ENCODE measurements at regions of chr4 and their contacts with region 1.

Region 1: DNA sequence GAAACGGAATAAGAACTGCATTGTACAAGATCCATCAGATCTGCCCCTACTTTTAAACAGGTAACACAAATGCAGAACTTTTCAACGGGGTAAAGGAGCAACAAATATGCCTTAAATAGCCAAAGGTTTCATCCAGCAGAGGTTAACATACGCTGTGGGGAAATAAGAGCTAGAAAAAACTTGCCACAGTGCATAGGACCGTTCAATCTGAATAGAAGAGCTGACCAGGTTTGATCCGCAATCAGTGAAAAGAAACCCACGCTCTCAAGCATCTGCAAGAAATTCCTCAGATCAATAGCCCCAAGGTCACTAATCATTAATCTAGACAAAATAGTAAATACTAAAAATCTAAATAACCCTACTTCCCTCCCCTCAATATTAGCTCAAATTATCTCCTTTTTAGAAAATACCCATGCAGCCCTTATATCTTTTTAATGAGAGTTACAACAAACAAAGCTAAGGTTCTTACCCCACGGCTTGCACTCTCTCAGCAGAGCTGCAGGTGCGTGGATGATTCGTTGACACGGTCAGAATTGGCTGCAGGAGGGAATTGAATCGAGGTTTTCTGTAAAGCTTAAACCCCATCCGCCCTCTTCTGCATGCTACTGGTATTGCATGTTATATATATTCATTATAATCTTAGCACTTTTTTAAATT is at the start of gene TLR10:
- DNase-seq: peak; percentile 46
- H3K4me3 ChIP-seq: no peak within 1 kb of the TSS
- H3K27ac ChIP-seq: no peak within 1 kb of the TSS
- H3K4me1 ChIP-seq: no peaks in the 10 kb centered on the region
- H3K27me3 ChIP-seq: no peaks in the 10 kb centered on the region
- CTCF ChIP-seq: peak; percentile 65
- total RNA-seq, gene TLR10: not detected in 2 replicates

Region 2: DNA sequence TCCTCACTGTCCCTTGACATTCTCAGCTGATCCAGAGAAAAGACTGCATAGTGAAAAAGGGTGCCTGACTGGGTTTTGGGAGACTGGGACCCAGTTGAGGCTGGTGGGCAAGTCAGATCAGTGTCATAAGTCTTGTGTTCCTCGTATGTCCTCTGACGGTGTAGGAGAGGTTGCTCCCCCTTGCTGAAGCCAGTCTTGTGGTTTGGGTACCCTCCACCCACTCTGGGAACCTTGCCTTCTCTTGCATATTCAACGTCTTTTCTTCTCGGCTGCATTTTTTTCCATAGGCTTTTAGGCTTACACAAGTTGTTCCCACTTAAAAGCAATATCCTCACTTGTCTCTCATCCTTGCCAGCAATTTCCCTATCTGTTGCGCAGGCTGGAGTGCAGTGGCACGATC is 610.5 kb before region 1 on chr4:
- CTCF ChIA-PET with region 1: interaction called, 14 read pairs
- POLR2A ChIA-PET with region 1: no interaction called
- intact Hi-C with region 1: no loop called
- DNase-seq: no peak
- H3K4me3 ChIP-seq: no peak overlapping the region
- H3K27ac ChIP-seq: no peak overlapping the region
- H3K4me1 ChIP-seq: peaks cover 7% of the 10 kb centered on the region
- H3K27me3 ChIP-seq: no peaks in the 10 kb centered on the region
- CTCF ChIP-seq: no peak

Region 3: GRCh38 chr4:38179690-38180377 is 602.7 kb before region 1 on chr4:
- CTCF ChIA-PET with region 1: interaction called, 18 read pairs
- POLR2A ChIA-PET with region 1: no interaction called
- intact Hi-C with region 1: loop called (anchors 2 kb)
- DNase-seq: peak; percentile 77
- H3K4me3 ChIP-seq: no peak overlapping the region
- H3K27ac ChIP-seq: no peak overlapping the region
- H3K4me1 ChIP-seq: no peaks in the 10 kb centered on the region
- H3K27me3 ChIP-seq: no peaks in the 10 kb centered on the region
- CTCF ChIP-seq: peak; percentile 90

Region 4: DNA sequence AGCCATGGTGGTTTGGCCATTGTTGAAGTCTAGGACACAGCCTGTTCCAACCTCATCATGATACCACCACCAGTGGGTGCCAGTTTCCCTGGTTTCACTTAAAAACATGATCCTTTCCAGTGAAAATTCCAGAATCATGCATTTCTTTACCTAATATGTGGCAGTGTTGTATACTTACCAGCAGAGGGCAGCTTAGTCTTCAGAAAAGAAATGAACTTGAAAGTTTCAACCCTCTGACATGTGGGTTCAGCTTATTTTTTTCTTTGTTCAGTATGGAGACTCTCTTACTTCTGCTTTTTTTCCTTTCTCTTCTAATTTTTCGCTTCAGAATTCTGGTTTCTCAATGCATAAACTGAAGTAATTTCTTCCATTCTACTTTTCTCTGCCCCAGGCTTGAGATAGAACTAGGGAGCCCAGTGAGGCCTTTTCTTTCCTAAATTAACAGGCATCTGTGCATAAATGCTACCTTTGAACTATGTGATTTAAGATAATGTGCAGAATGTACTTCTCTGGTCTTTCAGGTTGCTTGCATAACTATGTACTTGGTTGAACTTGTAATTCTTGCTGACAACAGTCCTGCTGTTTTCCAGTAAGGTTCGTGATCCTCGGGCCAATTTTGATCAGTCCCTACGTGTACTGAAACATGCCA is 687.0 kb after region 1 on chr4:
- CTCF ChIA-PET with region 1: no interaction called
- POLR2A ChIA-PET with region 1: no interaction called
- intact Hi-C with region 1: no loop called
- DNase-seq: peak; percentile 92
- H3K4me3 ChIP-seq: no peak overlapping the region
- H3K27ac ChIP-seq: peak overlapping the region; percentile 28
- H3K4me1 ChIP-seq: peaks cover 8% of the 10 kb centered on the region
- H3K27me3 ChIP-seq: no peaks in the 10 kb centered on the region
- CTCF ChIP-seq: peak; percentile 93